Naive thymus-derived CD4-positive, alpha-beta T cell (primary cell): ENCODE measurements at regions of chr6 and their contacts with region 1.

Region 1: GRCh38 chr6:134253681-134254080 is 64.2 kb downstream of the SGK1 start:
- DNase-seq: no peak
- ATAC-seq: no peak
- H3K4me3 ChIP-seq: no peak overlapping the region
- H3K4me3 Mint-ChIP-seq: no peak overlapping the region
- H3K27ac ChIP-seq: no peak overlapping the region
- H3K27ac Mint-ChIP-seq: no peak overlapping the region
- H3K4me1 ChIP-seq: peaks cover 8 to 23% of the 10 kb centered on the region in 2 donors
- H3K4me1 Mint-ChIP-seq: peaks cover 18 to 38% (median 32%) of the 10 kb centered on the region in 7 donors
- H3K27me3 ChIP-seq: no peaks in the 10 kb centered on the region
- H3K27me3 Mint-ChIP-seq: no peaks in the 10 kb centered on the region

Region 2: DNA sequence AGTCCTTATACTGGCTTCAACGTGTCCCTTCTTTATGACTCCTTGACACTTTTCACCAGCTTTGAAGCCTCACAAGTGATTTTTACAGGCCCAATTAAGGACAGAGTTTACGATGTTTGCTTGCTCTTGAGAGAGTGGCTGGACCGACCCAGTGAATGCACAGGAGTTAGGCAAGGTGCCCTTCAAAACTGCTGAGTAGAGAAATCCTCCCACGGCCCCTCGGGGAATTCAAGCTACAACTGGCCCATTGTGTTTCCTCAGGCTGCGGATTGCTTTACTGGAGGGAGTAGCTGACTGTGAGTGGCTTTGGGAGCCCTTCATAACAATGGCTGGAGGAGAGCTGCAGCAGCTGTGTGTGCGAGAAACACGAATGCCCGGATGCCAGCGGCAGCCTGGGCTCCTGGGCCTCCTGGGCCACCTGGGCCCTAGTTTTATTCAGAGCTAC is 14.3 kb after region 1 on chr6:
- CTCF ChIA-PET with region 1: interaction called, 4 read pairs
- POLR2A ChIA-PET with region 1: interaction called, 3 read pairs
- intact Hi-C with region 1: loop called in 1 of 2 experiments (anchors 1 kb)
- DNase-seq: no peak
- ATAC-seq: no peak
- H3K4me3 ChIP-seq: no peak overlapping the region
- H3K4me3 Mint-ChIP-seq: no peak overlapping the region
- H3K27ac ChIP-seq: no peak overlapping the region
- H3K27ac Mint-ChIP-seq: no peak overlapping the region
- H3K4me1 ChIP-seq: peaks cover 3 to 9% of the 10 kb centered on the region in 2 donors
- H3K4me1 Mint-ChIP-seq: peaks cover 7 to 16% (median 14%) of the 10 kb centered on the region in 7 donors
- H3K27me3 ChIP-seq: no peaks in the 10 kb centered on the region
- H3K27me3 Mint-ChIP-seq: no peaks in the 10 kb centered on the region

Region 3: DNA sequence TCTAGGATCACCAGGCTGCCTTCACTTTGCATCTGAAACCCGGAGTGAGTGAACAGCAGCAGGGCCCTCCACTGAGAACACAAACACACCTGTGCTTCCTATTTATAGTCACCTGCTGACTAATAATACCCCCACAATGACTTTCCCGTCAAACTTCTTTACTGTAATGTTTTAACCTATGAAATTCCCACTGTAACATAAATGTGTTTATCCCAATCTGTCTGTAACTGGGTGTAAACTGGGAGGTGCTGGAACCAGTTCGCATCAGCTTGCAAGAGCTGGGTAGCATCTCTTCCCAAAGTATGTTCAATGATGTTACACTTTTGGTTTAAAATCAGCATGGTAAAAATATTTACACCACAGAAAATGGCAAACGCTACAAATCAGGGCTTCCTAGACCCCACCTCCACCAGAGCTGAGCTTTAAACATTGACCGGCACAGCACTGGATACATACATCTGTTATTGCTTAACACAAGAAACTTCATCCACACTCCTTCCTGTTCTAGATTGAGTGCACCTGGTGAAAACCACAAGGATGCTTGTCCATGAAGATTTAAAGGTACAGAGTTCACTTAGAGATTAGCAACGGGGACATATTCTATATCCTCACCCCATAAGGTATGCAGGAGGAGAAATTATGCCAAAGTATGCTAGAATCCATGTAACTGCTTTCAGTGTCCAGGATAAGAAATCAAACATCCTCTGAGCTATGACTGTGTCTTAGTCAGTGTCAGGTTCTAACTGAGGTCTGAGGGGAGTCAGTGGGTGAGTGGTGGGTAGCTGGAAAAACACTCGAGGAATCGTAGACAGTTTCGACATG is 617.2 kb after region 1 on chr6:
- CTCF ChIA-PET with region 1: no interaction called
- POLR2A ChIA-PET with region 1: no interaction called
- intact Hi-C with region 1: no loop called
- DNase-seq: no peak
- ATAC-seq: no peak
- H3K4me3 ChIP-seq: no peak overlapping the region
- H3K4me3 Mint-ChIP-seq: peak overlapping the region in 1 of 10 donors; percentile 17
- H3K27ac ChIP-seq: no peak overlapping the region
- H3K27ac Mint-ChIP-seq: peak overlapping the region in 1 of 9 donors; percentile 17
- H3K4me1 ChIP-seq: peaks cover 0 to 5% of the 10 kb centered on the region in 2 donors
- H3K4me1 Mint-ChIP-seq: peaks cover 6 to 23% (median 13%) of the 10 kb centered on the region in 7 donors
- H3K27me3 ChIP-seq: no peaks in the 10 kb centered on the region
- H3K27me3 Mint-ChIP-seq: no peaks in the 10 kb centered on the region